CD8-positive, alpha-beta memory T cell (primary cell): ENCODE measurements at regions of chr17 and their contacts with region 1.

Region 1: DNA sequence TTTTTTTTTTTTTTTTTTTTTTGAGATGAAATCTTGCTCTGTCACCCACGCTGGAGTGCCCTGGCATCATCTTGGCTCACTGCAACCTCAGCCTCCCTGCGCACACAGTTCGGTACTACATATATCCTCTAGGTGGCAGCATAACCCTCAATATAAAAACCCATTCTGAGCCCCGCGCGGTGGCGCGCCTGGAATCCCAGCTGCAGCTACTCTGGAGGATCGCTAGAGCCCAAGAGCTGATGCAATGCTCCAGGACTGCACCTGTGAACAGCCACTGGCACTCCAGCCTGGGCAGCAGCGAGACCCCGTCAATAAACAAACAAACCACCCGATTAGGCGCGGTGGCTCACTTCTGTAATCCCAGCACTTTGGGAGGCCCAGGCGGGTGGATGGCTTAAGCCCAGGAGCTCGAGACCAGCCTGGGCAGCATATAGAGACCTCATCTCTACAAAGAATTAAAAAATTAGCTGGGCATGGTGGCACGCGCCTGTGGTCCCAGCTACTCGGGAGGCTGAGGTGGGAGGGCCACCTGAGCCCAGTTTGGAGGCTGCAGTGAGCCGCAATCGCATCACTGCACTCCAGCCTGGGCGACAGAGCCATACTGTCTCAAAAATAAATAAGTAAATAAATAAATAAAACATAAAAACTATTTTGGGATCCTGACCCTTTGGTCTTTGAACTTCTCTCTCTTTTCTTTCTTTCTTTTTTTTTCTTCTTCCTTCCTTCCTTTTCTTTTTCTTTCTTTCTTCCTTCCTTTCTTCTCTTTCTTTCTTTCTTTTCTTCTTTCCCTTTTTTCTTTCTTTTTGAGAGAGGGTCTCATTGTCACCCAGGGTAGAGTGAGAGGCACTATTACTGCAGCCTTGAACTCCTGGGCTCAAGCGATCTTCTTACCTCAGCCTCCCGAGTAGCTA is 15.4 kb upstream of the AKAP10 start:
- DNase-seq: peak; percentile 54 to 81 (median 70)
- H3K4me3 ChIP-seq: no peak overlapping the region
- H3K4me3 Mint-ChIP-seq: peak overlapping the region in 2 of 7 donors; percentile 12 to 28
- H3K27ac ChIP-seq: no peak overlapping the region
- H3K27ac Mint-ChIP-seq: no peak overlapping the region
- H3K4me1 ChIP-seq: no peaks in the 10 kb centered on the region
- H3K4me1 Mint-ChIP-seq: peaks cover 0 to 8% (median 7%) of the 10 kb centered on the region in 3 donors
- H3K27me3 ChIP-seq: peaks cover 3% of the 10 kb centered on the region
- H3K27me3 Mint-ChIP-seq: peaks cover 4 to 28% of the 10 kb centered on the region in 2 donors

Region 2: GRCh38 chr17:19805006-19805405 is 188.1 kb before region 1 on chr17:
- CTCF ChIA-PET with region 1: no interaction called
- POLR2A ChIA-PET with region 1: no interaction called
- DNase-seq: no peak
- H3K4me3 ChIP-seq: no peak overlapping the region
- H3K4me3 Mint-ChIP-seq: no peak overlapping the region
- H3K27ac ChIP-seq: no peak overlapping the region
- H3K27ac Mint-ChIP-seq: no peak overlapping the region
- H3K4me1 ChIP-seq: peaks cover 8% of the 10 kb centered on the region
- H3K4me1 Mint-ChIP-seq: peaks cover 2 to 5% (median 3%) of the 10 kb centered on the region in 3 donors
- H3K27me3 ChIP-seq: no peaks in the 10 kb centered on the region
- H3K27me3 Mint-ChIP-seq: no peaks in the 10 kb centered on the region

Region 3: GRCh38 chr17:19977311-19978208 is 15.5 kb before region 1 on chr17 and contains the start of gene AKAP10:
- CTCF ChIA-PET with region 1: interaction called, 22 read pairs
- POLR2A ChIA-PET with region 1: no interaction called
- DNase-seq: peak; percentile 86 to 93 (median 91)
- H3K4me3 ChIP-seq: peak within 1 kb of the TSS; percentile 89
- H3K4me3 Mint-ChIP-seq: peak within 1 kb of the TSS; percentile 90 to 99 (median 97)
- H3K27ac ChIP-seq: peak within 1 kb of the TSS; percentile 93
- H3K27ac Mint-ChIP-seq: peak within 1 kb of the TSS; percentile 92 to 99 (median 97)
- H3K4me1 ChIP-seq: peaks cover 32% of the 10 kb centered on the region
- H3K4me1 Mint-ChIP-seq: peaks cover 45 to 56% (median 55%) of the 10 kb centered on the region in 3 donors
- H3K27me3 ChIP-seq: no peaks in the 10 kb centered on the region
- H3K27me3 Mint-ChIP-seq: no peaks in the 10 kb centered on the region
- total RNA-seq, gene AKAP10: 31.7 to 32.6 TPM

Region 4: DNA sequence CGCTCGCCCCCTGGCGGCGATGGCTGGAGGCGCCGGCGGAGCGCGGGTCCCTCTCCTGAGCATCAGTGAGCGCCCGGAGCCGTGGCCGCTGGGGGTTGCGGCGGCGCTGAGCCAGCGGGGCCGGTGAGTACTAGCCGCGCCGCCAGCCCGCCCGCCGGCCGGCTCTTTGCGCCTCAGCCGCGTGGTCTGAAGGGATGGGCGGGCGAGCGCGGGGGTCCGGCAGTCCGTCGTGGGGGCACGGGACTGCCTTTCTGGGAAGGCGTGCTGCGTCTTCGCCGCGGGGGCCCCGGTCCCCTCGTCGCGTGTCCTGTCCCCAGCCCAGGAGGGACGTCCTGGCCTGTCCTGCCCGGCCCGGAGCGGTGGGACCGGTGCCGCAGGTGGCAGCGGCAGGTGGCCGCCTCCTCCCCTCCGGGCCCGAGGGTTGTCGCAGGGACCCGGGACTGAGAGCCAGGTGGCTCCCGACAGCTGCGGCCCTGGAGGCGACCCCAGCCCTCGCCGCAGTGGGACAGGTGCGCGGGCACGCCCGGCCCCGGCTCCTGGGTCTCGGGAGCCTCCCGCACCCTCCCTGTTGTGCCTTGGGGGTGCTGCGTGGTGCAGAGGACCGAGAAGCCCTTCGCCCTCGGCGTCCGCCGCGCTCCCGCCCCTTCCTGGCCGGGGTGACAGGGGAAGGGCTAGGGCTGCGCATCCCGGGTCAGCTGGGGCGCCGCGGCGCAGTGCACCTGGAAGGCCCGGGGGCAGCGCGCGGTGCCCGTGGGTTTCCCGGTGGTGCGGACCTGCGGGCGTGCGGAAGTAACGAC is 16.4 kb after region 1 on chr17 and contains the start of gene SPECC1:
- CTCF ChIA-PET with region 1: interaction called, 13 read pairs
- POLR2A ChIA-PET with region 1: no interaction called
- DNase-seq: peak; percentile 77 to 88 (median 83)
- H3K4me3 ChIP-seq: peak within 1 kb of the TSS; percentile 82
- H3K4me3 Mint-ChIP-seq: peak within 1 kb of the TSS; percentile 87 to 97 (median 94)
- H3K27ac ChIP-seq: no peak within 1 kb of the TSS
- H3K27ac Mint-ChIP-seq: peak within 1 kb of the TSS in 7 of 8 donors; percentile 48 to 91 (median 88)
- H3K4me1 ChIP-seq: peaks cover 12% of the 10 kb centered on the region
- H3K4me1 Mint-ChIP-seq: peaks cover 11 to 15% (median 14%) of the 10 kb centered on the region in 3 donors
- H3K27me3 ChIP-seq: peaks cover 4% of the 10 kb centered on the region
- H3K27me3 Mint-ChIP-seq: peaks cover 26 to 48% of the 10 kb centered on the region in 2 donors
- total RNA-seq, gene SPECC1: 12.5 to 13.4 TPM

Region 5: DNA sequence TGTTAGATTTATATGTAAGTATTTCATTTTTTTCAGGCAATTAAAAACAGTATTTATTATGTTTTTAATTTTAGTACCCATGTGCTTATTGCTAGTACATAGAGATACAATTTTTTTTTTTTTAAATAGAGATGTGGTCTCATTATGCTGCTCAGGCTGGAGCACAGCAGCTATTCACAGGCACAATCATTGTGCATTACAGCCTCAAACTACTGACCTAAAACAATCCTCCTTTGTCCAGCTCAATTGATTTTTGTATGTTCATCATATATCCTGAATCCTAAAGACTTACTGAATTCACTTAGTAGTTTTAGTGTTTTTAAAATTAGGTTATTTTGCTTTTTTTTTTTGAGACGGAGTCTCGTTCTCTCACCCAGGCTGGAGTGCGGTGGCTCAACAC is 42.4 kb after region 1 on chr17:
- CTCF ChIA-PET with region 1: no interaction called
- POLR2A ChIA-PET with region 1: no interaction called
- DNase-seq: no peak
- H3K4me3 ChIP-seq: no peak overlapping the region
- H3K4me3 Mint-ChIP-seq: no peak overlapping the region
- H3K27ac ChIP-seq: no peak overlapping the region
- H3K27ac Mint-ChIP-seq: no peak overlapping the region
- H3K4me1 ChIP-seq: no peaks in the 10 kb centered on the region
- H3K4me1 Mint-ChIP-seq: peaks cover 9 to 16% (median 9%) of the 10 kb centered on the region in 3 donors
- H3K27me3 ChIP-seq: no peaks in the 10 kb centered on the region
- H3K27me3 Mint-ChIP-seq: peaks cover 0 to 5% of the 10 kb centered on the region in 2 donors

Region 6: GRCh38 chr17:20111538-20111937 is 118.5 kb after region 1 on chr17:
- CTCF ChIA-PET with region 1: interaction called, 58 read pairs
- POLR2A ChIA-PET with region 1: no interaction called
- DNase-seq: no peak
- H3K4me3 ChIP-seq: no peak overlapping the region
- H3K4me3 Mint-ChIP-seq: no peak overlapping the region
- H3K27ac ChIP-seq: no peak overlapping the region
- H3K27ac Mint-ChIP-seq: no peak overlapping the region
- H3K4me1 ChIP-seq: no peaks in the 10 kb centered on the region
- H3K4me1 Mint-ChIP-seq: no peaks in the 10 kb centered on the region
- H3K27me3 ChIP-seq: no peaks in the 10 kb centered on the region
- H3K27me3 Mint-ChIP-seq: peaks cover 0 to under 1% of the 10 kb centered on the region in 2 donors

Region 7: DNA sequence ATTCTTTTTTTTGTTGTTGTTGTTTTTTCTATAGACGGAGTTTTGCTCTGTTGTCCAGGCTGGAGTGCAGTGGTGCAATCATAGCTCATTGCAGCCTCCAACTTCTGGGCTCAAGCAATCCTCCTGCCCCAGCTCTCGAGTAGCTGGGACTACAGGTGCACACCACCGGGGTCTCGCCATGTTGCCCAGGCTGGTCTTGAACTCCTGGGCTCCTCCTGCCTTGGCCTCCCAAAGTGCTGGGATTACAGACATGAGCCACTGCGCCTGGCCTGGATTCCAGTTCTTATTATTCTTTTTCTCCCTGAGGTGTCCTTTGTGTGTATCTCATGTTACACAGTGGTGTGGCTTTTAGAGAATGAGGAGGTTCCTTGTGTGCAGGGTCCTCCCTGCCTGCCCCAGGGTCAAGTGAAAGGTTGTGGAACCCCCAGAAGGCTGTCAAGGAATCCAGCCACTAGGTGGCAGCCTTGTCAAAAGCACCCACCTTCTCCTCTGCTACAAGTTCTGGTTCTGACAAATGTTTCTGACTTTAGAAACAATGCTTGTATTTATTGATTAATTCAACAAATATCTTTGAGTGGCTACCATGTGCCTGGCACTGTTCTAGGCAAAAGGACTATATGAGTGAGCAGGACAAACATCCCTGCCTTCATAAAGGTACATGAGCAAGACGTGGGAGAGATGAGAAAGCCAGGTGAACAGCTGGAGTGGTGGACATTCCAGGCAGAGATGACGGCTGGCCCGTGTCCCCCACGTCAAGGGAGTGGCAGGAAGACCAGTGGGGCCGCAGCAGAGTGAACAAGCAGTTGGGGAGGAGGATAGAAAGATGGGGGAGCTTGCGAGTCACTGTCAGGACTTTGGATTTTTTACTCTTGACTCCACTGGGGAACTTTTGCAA is 128.5 kb after region 1 on chr17:
- CTCF ChIA-PET with region 1: interaction called, 58 read pairs
- POLR2A ChIA-PET with region 1: interaction called, 5 read pairs
- DNase-seq: peak; percentile 45 to 71 (median 53)
- H3K4me3 ChIP-seq: no peak overlapping the region
- H3K4me3 Mint-ChIP-seq: no peak overlapping the region
- H3K27ac ChIP-seq: no peak overlapping the region
- H3K27ac Mint-ChIP-seq: peak overlapping the region in 1 of 8 donors; percentile 46
- H3K4me1 ChIP-seq: no peaks in the 10 kb centered on the region
- H3K4me1 Mint-ChIP-seq: peaks cover 0 to 3% (median 0%) of the 10 kb centered on the region in 3 donors
- H3K27me3 ChIP-seq: no peaks in the 10 kb centered on the region
- H3K27me3 Mint-ChIP-seq: peaks cover 1 to 4% of the 10 kb centered on the region in 2 donors